ENCODE measurements at regions of chr6 and their contacts with region 1.

Region 1: DNA sequence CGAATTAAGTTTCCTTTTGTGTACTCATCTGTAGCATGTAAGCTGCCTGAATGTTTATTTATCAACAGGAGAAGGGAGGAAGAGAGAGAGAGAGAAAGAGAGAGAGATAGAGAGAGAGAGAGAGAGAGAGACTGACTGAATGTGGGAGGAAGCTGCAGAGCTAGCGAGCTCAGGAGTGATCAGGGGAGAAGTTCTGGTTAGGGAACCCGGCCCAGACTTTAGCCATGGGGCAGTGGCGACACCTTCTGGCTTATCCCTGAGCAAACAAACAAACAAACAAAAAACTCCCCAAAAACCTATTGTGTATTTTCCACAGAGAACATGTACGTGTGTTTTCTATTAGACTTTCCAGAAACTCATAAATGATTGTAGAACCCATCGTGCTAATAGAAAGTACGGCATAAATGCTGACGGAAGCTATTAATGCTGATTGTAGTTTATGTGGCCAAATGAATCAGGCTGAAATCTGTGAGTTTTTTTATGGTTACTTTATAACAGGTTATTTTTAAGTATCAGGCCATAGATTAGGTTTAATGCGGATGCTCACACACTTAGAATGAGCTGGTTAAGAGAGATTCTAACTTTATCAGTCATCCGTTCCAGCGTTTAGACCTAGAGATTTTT is 92.8 kb downstream of the CLIC5 start:
- DNase-seq: peak; percentile 42 to 87 (median 70)

Region 2: GRCh38 chr6:44475779-44476434 is 1446.9 kb before region 1 on chr6:
- intact Hi-C with region 1: loop called (anchors 5 kb)
- DNase-seq: peak; percentile 70 to 93 (median 84)

Region 3: DNA sequence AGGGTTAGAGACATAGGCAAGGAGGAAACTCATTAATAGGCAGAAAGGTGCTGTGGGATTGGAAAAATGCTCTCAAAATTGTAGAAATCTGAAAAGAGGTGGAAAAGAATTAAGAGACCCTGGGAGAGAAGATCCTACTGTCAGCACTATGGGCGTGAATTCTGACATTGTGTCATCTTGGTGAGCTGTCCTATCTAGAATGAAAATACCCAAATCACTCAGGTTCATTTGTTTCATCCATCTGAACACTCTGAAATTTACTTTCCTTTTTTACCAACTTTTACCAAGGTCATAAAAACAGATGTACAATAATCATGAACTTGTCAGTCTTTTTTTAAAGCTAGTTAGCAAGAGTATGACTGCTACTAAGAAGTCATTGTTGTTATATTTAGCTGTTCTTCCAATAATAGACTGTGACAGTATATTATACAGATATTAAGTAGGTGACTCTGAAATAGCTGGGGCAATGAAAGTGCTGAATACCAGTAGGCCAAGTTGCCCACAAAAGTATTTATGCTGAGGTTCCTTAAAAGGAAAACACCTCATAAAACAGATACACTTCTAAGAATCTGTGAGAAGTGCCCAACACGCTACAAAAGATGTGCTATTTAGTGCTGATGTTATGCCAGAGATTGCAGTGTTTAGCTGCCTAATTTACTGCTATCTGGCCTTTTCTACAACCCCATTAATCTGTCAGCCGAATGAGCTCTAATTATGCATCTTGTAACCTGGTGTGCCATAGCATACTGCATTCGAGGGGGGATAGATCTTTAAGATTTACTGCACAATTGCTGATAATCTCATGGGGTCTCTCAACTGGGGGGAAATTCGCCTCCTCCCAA is 327.6 kb before region 1 on chr6:
- intact Hi-C with region 1: no loop called
- DNase-seq: no peak

Measured in head of caudate nucleus (tissue), 42 donors.